Activated CD4-positive, alpha-beta memory T cell treated with anti-CD3 and anti-CD28 coated beads, Interleukin-2, amount 10 ng/mL, durations not matched to agents 7 days and 5 days (primary cell): ENCODE measurements at regions of chrX and their contacts with region 1.

Region 1: GRCh38 chrX:153667956-153668396 is 5.6 kb downstream of the PNCK start:
- DNase-seq: peak; percentile 81
- H3K4me3 Mint-ChIP-seq: peak overlapping the region; percentile 65
- H3K27ac Mint-ChIP-seq: no peak overlapping the region
- H3K4me1 Mint-ChIP-seq: peaks cover 7% of the 10 kb centered on the region
- H3K27me3 Mint-ChIP-seq: peaks cover 20% of the 10 kb centered on the region

Region 2: GRCh38 chrX:153539171-153539978 is 128.6 kb before region 1 on chrX:
- CTCF ChIA-PET with region 1: interaction called, 38 read pairs
- POLR2A ChIA-PET with region 1: no interaction called
- DNase-seq: peak; percentile 60
- H3K4me3 Mint-ChIP-seq: no peak overlapping the region
- H3K27ac Mint-ChIP-seq: no peak overlapping the region
- H3K4me1 Mint-ChIP-seq: no peaks in the 10 kb centered on the region
- H3K27me3 Mint-ChIP-seq: no peaks in the 10 kb centered on the region

Region 3: DNA sequence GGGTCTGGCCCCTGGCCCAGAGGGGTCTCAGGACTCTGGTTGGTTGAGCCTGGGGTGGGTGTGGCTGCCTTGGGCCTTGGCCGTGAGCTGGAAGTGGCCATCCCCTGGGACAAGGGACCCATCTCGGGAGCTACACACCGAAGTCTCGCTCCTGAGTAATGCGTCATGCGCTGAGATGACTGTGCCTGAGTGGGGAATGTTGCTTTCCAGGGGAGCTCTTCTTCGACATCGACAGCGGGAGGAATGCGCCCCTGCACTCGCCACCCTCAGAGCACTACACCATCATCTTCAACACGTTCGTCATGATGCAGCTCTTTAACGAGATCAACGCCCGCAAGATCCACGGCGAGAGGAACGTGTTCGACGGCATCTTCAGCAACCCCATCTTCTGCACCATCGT is 107.5 kb before region 1 on chrX:
- CTCF ChIA-PET with region 1: no interaction called
- POLR2A ChIA-PET with region 1: no interaction called
- DNase-seq: no peak
- H3K4me3 Mint-ChIP-seq: no peak overlapping the region
- H3K27ac Mint-ChIP-seq: no peak overlapping the region
- H3K4me1 Mint-ChIP-seq: no peaks in the 10 kb centered on the region
- H3K27me3 Mint-ChIP-seq: no peaks in the 10 kb centered on the region

Region 4: GRCh38 chrX:153609917-153610428 is 58.0 kb before region 1 on chrX:
- CTCF ChIA-PET with region 1: interaction called, 17 read pairs
- POLR2A ChIA-PET with region 1: no interaction called
- DNase-seq: peak; percentile 72
- H3K4me3 Mint-ChIP-seq: peak overlapping the region; percentile 71
- H3K27ac Mint-ChIP-seq: no peak overlapping the region
- H3K4me1 Mint-ChIP-seq: peaks cover 12% of the 10 kb centered on the region
- H3K27me3 Mint-ChIP-seq: peaks cover 16% of the 10 kb centered on the region

Region 5: DNA sequence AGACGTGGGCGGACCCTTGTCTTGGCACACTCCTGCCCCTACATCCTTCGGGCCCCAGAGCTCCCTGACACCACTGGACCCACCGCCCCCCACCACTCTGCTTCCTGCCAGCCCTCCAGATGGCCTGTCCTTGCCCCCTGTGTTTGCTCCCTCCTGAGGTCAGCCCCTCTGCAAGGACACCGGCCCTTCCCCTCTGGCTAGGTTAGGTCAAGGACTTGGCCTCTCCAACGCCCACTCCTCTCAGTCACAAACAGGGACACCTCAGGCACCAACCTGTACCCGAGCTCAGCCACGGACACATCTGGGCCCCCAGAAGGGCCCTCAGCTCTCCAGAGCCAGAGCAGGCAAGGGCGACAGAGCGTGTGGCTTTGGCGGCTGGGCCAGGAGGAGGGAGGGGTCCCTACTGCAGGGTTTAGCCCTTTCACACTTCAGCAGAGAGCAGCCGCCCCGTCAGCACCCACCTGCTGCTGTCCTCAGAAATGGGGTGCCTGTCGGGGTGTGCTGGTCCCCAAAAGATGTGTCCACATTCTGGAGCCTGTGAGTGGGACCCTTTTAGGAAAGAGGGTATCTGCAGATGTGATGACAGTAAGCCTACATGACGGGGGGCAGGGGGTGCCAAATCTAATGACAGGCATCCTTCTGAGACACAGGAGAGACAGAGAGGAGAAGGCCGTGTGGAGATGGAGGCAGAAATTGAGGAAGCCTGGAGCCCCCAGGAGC is 44.5 kb before region 1 on chrX:
- CTCF ChIA-PET with region 1: no interaction called
- POLR2A ChIA-PET with region 1: no interaction called
- DNase-seq: no peak
- H3K4me3 Mint-ChIP-seq: no peak overlapping the region
- H3K27ac Mint-ChIP-seq: no peak overlapping the region
- H3K4me1 Mint-ChIP-seq: no peaks in the 10 kb centered on the region
- H3K27me3 Mint-ChIP-seq: peaks cover 3% of the 10 kb centered on the region

Region 6: DNA sequence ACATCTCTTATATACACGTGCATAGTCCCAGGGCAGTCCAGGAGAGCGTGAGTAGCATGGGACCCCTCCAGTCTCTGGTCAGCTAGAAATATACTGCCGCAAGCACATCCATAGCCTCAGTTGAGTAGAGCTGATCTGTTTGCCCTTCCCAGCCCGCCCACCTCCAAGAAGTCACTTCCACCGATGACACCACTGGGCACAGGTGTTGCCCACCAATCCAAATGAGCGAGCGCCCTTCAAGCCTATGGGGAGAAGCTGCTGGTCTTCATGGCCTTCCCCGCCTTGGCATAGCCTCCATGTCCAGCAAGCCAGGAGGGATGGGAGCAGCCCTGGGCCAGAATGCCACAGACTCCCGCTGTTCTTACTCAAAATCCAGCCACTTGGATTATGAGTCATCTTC is 10.8 kb before region 1 on chrX:
- CTCF ChIA-PET with region 1: interaction called, 13 read pairs
- POLR2A ChIA-PET with region 1: no interaction called
- DNase-seq: no peak
- H3K4me3 Mint-ChIP-seq: no peak overlapping the region
- H3K27ac Mint-ChIP-seq: no peak overlapping the region
- H3K4me1 Mint-ChIP-seq: peaks cover 2% of the 10 kb centered on the region
- H3K27me3 Mint-ChIP-seq: peaks cover 16% of the 10 kb centered on the region